Naive thymus-derived CD4-positive, alpha-beta T cell (primary cell): ENCODE measurements at regions of chr10 and their contacts with region 1.

Region 1: GRCh38 chr10:113563306-113564088 is 10.6 kb downstream of the HABP2 start:
- DNase-seq: peak; percentile 24 to 69 (median 54)
- ATAC-seq: peak; percentile 90
- H3K4me3 ChIP-seq: peak overlapping the region; percentile 59
- H3K4me3 Mint-ChIP-seq: peak overlapping the region; percentile 61 to 87 (median 80)
- H3K27ac ChIP-seq: no peak overlapping the region
- H3K27ac Mint-ChIP-seq: peak overlapping the region in 2 of 9 donors; percentile 17 to 21
- H3K4me1 ChIP-seq: peaks cover 0 to 7% of the 10 kb centered on the region in 2 donors
- H3K4me1 Mint-ChIP-seq: peaks cover 0 to 8% (median 5%) of the 10 kb centered on the region in 7 donors
- H3K27me3 ChIP-seq: no peaks in the 10 kb centered on the region
- H3K27me3 Mint-ChIP-seq: peaks cover 2 to 10% (median 5%) of the 10 kb centered on the region in 5 donors

Region 2: DNA sequence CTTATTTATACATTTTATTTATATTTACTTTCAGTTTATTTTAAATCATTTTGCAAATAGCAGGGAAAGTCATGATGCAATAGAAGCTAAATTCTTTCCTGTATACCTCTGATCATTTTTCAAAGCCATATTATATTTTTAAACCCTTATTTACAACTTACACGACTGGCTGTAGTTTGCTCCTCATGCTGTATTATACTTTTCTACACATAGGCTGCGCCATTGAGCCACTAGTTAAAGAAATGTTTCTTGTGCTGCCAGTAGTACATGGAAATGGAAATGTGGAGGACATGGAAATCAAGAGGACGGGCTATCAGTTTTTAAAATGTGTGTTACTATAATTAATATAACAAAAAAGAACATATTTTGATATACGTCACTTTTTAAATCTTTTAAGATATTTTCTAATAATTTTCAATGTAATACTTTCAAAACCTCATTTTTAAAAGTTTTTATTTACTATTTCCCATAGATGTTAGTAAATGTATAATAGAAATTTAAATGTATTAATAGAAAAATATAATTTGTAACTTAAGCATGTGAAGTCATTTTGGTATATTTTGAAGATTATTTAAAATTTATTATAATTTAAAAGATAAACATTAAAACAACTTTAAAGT is 998.0 kb before region 1 on chr10:
- CTCF ChIA-PET with region 1: no interaction called
- POLR2A ChIA-PET with region 1: no interaction called
- intact Hi-C with region 1: loop called in 1 of 2 experiments (anchors 5 kb)
- DNase-seq: peak in 1 of 9 donors; percentile 2
- ATAC-seq: no peak
- H3K4me3 ChIP-seq: no peak overlapping the region
- H3K4me3 Mint-ChIP-seq: no peak overlapping the region
- H3K27ac ChIP-seq: no peak overlapping the region
- H3K27ac Mint-ChIP-seq: no peak overlapping the region
- H3K4me1 ChIP-seq: no peaks in the 10 kb centered on the region
- H3K4me1 Mint-ChIP-seq: no peaks in the 10 kb centered on the region
- H3K27me3 ChIP-seq: no peaks in the 10 kb centered on the region
- H3K27me3 Mint-ChIP-seq: no peaks in the 10 kb centered on the region

Region 3: DNA sequence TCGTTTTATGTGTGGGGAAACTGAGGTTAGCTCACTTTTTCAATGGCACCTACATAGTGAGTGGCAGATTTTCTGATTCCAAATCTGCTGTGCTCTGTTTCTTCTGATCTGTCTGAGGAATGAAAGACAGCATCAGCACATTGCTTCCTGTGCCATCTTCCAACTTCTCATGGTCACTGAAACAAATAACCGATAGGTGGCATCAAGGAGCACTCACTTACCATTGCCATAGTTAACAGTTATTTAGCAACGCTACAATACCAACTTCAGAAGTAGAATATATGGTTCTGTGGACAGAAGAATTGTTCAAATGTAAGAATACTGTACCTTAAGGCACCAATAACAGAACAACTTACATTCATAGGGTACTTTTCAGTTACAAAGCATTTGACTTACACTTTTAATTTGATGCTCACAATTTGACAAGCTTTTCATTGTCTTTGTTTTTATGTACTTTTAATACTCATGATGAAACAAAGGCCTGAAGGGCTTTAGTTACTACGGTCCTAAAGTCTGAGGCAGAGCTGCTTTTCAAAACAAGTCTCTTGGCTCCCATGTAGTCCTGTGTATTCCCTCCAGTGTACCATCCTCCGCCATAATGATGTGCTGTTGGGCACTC is 842.3 kb before region 1 on chr10:
- CTCF ChIA-PET with region 1: no interaction called
- POLR2A ChIA-PET with region 1: no interaction called
- intact Hi-C with region 1: loop called in 1 of 2 experiments (anchors 5 kb)
- DNase-seq: peak in 5 of 9 donors; percentile 7 to 42 (median 21)
- ATAC-seq: no peak
- H3K4me3 ChIP-seq: no peak overlapping the region
- H3K4me3 Mint-ChIP-seq: no peak overlapping the region
- H3K27ac ChIP-seq: no peak overlapping the region
- H3K27ac Mint-ChIP-seq: no peak overlapping the region
- H3K4me1 ChIP-seq: no peaks in the 10 kb centered on the region
- H3K4me1 Mint-ChIP-seq: peaks cover 0 to 4% (median 0%) of the 10 kb centered on the region in 7 donors
- H3K27me3 ChIP-seq: no peaks in the 10 kb centered on the region
- H3K27me3 Mint-ChIP-seq: no peaks in the 10 kb centered on the region

Region 4: DNA sequence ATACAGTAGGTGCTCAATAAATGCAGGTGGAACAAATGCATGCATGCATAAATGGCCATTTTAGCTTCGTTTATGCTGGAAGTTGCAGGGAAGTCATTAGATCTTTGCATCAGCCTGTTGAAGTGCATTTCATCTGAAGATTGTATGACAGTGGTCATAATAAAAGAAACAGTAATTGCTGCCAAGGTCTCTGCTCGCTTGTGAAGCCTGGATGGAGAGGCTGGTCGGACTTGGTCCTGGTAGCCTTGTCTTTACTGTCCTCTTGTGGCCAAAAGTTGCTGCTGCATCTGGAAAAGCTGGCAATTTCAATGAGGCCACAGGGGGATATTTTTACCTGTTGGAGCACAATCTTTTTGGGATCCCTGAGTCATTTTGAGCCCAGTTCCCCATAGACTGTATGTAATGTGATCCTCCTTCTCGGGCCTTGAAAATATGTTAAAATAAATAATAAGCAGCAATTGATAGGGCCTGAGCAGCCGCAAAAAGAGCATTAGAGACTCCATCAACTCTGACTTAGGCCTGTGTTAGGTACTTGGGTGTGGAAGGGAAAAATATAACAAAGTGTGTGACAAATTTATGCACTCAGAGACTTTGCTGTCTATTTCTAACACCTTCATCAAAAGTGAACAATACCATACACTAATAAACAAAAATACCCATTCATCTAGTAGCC is 42.2 kb before region 1 on chr10:
- CTCF ChIA-PET with region 1: no interaction called
- POLR2A ChIA-PET with region 1: no interaction called
- intact Hi-C with region 1: loop called in 1 of 2 experiments (anchors 1 kb)
- DNase-seq: peak in 1 of 9 donors; percentile 2
- ATAC-seq: peak; percentile 40
- H3K4me3 ChIP-seq: no peak overlapping the region
- H3K4me3 Mint-ChIP-seq: no peak overlapping the region
- H3K27ac ChIP-seq: no peak overlapping the region
- H3K27ac Mint-ChIP-seq: peak overlapping the region in 1 of 9 donors; percentile 16
- H3K4me1 ChIP-seq: no peaks in the 10 kb centered on the region
- H3K4me1 Mint-ChIP-seq: no peaks in the 10 kb centered on the region
- H3K27me3 ChIP-seq: no peaks in the 10 kb centered on the region
- H3K27me3 Mint-ChIP-seq: peaks cover 0 to 14% (median 13%) of the 10 kb centered on the region in 5 donors